Right ventricle myocardium inferior (tissue), 1 donor: ENCODE measurements at regions of chr6 and their contacts with region 1.

Region 1: GRCh38 chr6:33317669-33318425 is at the start of gene ZBTB22:
- DNase-seq: peak; percentile 100
- ATAC-seq: peak; percentile 82
- total RNA-seq, gene ZBTB22: 10.8 TPM

Region 2: GRCh38 chr6:33271458-33272274 is 46.2 kb before region 1 on chr6 and contains the starts of genes RPS18 and VPS52:
- intact Hi-C with region 1: loop called (anchors 2 kb)
- DNase-seq: peak; percentile 95
- ATAC-seq: peak; percentile 96
- total RNA-seq, gene RPS18: 1,075 TPM
- total RNA-seq, gene VPS52: 31.4 TPM

Region 3: DNA sequence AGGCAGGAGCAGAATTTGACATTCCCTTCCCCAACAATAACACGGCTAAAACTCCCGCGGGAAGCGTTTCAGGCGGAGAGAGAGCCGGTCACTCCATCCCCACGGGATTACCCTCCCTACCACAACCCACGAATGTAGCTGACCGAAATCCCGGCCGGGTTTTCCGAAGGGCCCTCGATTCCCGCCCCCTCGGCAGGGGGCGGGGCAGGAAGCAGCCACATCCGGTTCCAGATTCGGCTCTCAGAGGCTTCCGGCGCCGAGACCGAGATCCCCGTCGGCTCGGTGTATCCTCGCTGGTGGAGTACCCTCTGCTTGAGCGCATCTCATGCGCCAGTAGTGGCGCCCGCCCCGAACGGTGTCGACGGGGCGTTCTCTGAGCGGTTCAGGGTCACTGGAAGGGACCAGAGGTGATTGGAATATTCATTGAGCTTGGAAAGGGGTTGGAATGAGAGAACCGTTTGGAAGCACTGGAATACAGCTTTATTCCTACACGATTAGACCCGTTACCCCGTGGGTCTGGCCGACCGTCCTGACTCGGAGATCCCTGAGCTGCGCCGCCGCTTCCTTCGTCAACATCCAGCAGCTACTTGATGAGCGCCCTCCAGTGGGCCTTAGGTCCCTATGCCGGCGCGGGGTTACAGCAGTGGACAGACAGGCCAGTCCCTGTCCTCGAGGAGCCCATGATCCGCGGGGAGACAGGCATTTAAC is 18.5 kb before region 1 on chr6:
- intact Hi-C with region 1: loop called (anchors 2 kb)
- DNase-seq: peak; percentile 95
- ATAC-seq: peak; percentile 81